ENCODE measurements at regions of chr5 and their contacts with region 1.

Region 1: GRCh38 chr5:151523335-151523734 is 67.8 kb downstream of the FAT2 start:
- H3K4me3 ChIP-seq: no peak overlapping the region
- H3K27ac ChIP-seq: no peak overlapping the region
- H3K4me1 ChIP-seq: no peaks in the 10 kb centered on the region
- CTCF ChIP-seq: peak; percentile 57; the same call in 1 of the 2 replicates

Region 2: GRCh38 chr5:151384106-151384505 is 139.2 kb before region 1 on chr5:
- CTCF ChIA-PET with region 1: interaction called, 11 read pairs
- POLR2A ChIA-PET with region 1: no interaction called
- H3K4me3 ChIP-seq: no peak overlapping the region
- H3K27ac ChIP-seq: no peak overlapping the region
- H3K4me1 ChIP-seq: no peaks in the 10 kb centered on the region
- CTCF ChIP-seq: no peak

Measured in HEK293 (cell line).